Common myeloid progenitor, CD34-positive (primary cell): ENCODE measurements at regions of chr11 and their contacts with region 1.

Region 1: DNA sequence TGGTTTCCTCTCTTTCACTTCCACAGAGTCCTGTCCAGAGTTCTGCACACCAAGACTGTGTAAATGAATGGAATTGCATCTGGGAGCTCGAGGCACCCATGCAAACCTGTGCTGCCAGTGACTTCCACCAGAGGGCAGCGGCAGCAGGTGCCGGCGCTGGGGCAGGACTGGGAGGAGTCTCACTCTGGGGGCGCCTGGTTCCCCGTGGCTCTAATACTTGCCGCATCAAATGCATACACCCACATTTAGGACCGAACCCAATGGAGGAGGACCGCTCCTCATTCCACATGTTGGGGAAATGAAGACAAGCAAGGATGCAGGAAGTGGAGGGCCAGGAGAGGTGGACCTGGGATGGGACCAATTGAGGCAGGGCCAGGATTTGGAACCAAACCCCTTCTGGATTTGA is 1.1 kb upstream of the CD6 start:
- DNase-seq: peak; percentile 48 to 77 (median 71)
- H3K4me3 ChIP-seq: no peak overlapping the region
- H3K27ac ChIP-seq: no peak overlapping the region
- H3K4me1 ChIP-seq: peaks cover 0 to 20% (median 15%) of the 10 kb centered on the region in 4 experiments
- H3K27me3 ChIP-seq: peaks cover 0 to 3% (median 0%) of the 10 kb centered on the region in 5 experiments

Region 2: GRCh38 chr11:60985991-60986915 is 15.9 kb after region 1 on chr11:
- CTCF ChIA-PET with region 1: interaction called, 12 read pairs
- POLR2A ChIA-PET with region 1: no interaction called
- DNase-seq: peak in 1 of 3 donors; percentile 30
- H3K4me3 ChIP-seq: no peak overlapping the region
- H3K27ac ChIP-seq: peak overlapping the region in 1 of 2 experiments; percentile 2
- H3K4me1 ChIP-seq: no peaks in the 10 kb centered on the region
- H3K27me3 ChIP-seq: no peaks in the 10 kb centered on the region